Breast epithelium (tissue), 4 donors: ENCODE measurements at regions of chr2 and their contacts with region 1.

Region 1: GRCh38 chr2:236089271-236090026 is 78.7 kb downstream of the GBX2 start:
- DNase-seq: no peak
- H3K4me3 ChIP-seq: no peak overlapping the region
- H3K27ac ChIP-seq: no peak overlapping the region
- H3K4me1 ChIP-seq: no peaks in the 10 kb centered on the region
- H3K27me3 ChIP-seq: no peaks in the 10 kb centered on the region
- CTCF ChIP-seq: no peak
- POLR2A ChIP-seq: no peak

Region 2: DNA sequence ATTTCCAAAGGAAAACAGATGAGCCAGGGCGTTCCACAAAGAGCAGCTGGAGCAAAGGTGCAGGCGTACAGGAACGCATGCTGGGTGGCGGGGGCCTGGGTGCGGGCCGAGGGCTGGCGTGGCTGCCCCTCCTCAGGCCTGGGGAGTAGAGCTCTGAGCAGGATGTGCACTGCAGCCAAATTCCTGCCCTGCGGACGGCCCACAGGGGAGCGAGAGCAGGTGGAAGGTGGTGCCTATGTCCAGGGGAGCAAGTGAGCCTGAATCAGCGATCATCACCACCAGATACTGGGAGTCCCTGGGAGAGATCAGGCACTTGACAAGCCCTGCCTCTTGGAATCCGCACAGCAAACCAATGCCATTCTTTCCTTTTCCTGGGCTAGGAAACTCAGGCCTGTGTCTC is 27.6 kb before region 1 on chr2:
- intact Hi-C with region 1: no loop called
- DNase-seq: no peak
- H3K4me3 ChIP-seq: no peak overlapping the region
- H3K27ac ChIP-seq: no peak overlapping the region
- H3K4me1 ChIP-seq: no peaks in the 10 kb centered on the region
- H3K27me3 ChIP-seq: no peaks in the 10 kb centered on the region
- CTCF ChIP-seq: no peak
- POLR2A ChIP-seq: no peak

Region 3: GRCh38 chr2:236073246-236073645 is 16.2 kb before region 1 on chr2:
- intact Hi-C with region 1: loop called (anchors 1 kb)
- DNase-seq: no peak
- H3K4me3 ChIP-seq: no peak overlapping the region
- H3K27ac ChIP-seq: no peak overlapping the region
- H3K4me1 ChIP-seq: no peaks in the 10 kb centered on the region
- H3K27me3 ChIP-seq: no peaks in the 10 kb centered on the region
- CTCF ChIP-seq: no peak
- POLR2A ChIP-seq: no peak

Region 4: GRCh38 chr2:236472720-236473495 is 383.5 kb after region 1 on chr2:
- intact Hi-C with region 1: no loop called
- DNase-seq: no peak
- H3K4me3 ChIP-seq: no peak overlapping the region
- H3K27ac ChIP-seq: no peak overlapping the region
- H3K4me1 ChIP-seq: no peaks in the 10 kb centered on the region
- H3K27me3 ChIP-seq: no peaks in the 10 kb centered on the region
- CTCF ChIP-seq: no peak
- POLR2A ChIP-seq: no peak